Head of caudate nucleus (tissue), 42 donors: ENCODE measurements at regions of chr9 and their contacts with region 1.

Region 1: DNA sequence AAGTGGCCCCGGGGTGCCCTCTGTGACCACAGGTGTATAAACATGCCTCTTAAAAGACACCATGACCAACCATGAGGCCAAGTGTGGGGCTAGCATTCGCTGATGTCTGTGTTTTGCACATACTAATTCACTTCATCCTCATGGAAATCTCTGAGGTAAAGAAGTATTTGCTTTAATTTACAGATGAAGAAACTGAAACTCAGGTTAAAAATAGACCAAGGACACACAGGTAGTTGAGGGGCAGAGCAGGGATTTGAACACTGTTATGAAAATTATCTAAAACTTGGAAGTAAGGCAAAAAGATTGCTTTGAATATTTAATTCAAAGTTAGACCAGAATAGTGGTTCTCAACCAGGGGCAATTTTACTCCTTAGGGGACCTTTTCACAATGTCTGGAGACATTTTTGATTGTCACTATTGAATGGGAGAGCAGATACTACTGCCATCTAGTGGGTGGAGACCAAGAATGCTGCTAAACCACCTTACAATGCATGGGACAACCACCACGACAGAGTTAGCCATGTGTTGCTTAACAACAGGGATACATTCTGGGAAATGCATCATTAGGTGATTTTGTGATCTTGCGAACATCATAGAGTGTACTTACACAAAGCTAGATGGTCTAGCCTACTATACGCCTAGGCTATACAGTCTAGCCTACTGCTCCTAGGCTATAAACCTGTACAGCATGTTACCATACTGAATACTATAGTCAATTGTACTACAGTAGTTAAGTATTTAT is 8.0 kb upstream of the FXN start:
- DNase-seq: peak in 20 of 42 donors; percentile 8 to 68 (median 36)

Region 2: GRCh38 chr9:68584189-68585033 is 443.1 kb before region 1 on chr9:
- intact Hi-C with region 1: loop called (anchors 5 kb)
- DNase-seq: peak; percentile 68 to 91 (median 83)

Region 3: GRCh38 chr9:69085569-69086283 is 58.2 kb after region 1 on chr9:
- intact Hi-C with region 1: no loop called
- DNase-seq: no peak